ENCODE measurements at regions of chr19 and their contacts with region 1.

Region 1: GRCh38 chr19:41449079-41449864 is 6.3 kb downstream of the ERICH4 start:
- DNase-seq: peak; percentile 82
- ATAC-seq: peak; percentile 97
- H3K4me3 ChIP-seq: peak overlapping the region in 3 of 5 experiments; percentile 31 to 48 (median 35)
- H3K4me3 Mint-ChIP-seq: peak overlapping the region; percentile 74
- H3K27ac ChIP-seq: no peak overlapping the region
- H3K27ac Mint-ChIP-seq: peak overlapping the region; percentile 44
- H3K4me1 ChIP-seq: peaks cover 12 to 20% of the 10 kb centered on the region in 2 donors
- H3K4me1 Mint-ChIP-seq: peaks cover 20% of the 10 kb centered on the region
- H3K27me3 ChIP-seq: peaks cover 0 to 1% (median 0%) of the 10 kb centered on the region in 4 experiments
- H3K27me3 Mint-ChIP-seq: peaks cover 5% of the 10 kb centered on the region
- CTCF ChIP-seq: peak; percentile 99

Region 2: DNA sequence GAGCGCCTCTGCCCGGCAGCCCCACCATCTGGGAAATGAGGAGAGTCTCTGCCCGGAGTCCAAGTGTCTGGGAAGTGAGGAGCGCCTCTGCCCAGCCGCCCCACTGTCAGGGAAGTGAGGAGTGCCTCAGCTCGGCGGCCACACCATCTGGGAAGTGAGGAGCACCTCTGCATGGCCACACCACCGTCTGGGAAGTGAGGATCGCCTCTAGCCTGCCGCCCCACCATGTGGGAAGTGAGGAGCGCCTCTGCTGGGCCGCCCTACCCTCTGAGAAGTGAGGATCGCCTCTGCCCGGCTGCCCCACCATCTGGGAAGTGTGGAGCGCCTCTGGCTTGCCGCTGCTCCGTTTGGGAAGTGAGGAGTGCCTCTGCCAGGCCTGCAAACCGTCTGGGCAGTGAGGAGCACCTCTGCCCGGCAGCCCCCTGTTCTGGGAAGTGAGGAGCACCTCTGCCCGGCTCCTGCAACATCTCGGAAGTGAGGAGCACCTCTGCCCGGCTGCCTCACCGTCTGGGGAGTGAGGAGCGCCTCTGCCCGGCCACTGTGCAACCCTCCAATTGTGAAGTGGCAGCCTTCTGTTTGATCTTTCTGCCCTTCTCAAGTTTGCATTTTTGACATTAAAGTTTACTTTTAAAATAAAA is 65.9 kb after region 1 on chr19:
- CTCF ChIA-PET with region 1: interaction called, 14 read pairs
- POLR2A ChIA-PET with region 1: no interaction called
- intact Hi-C with region 1: loop called (anchors 1 kb)
- DNase-seq: no peak
- ATAC-seq: no peak
- H3K4me3 ChIP-seq: no peak overlapping the region
- H3K4me3 Mint-ChIP-seq: no peak overlapping the region
- H3K27ac ChIP-seq: no peak overlapping the region
- H3K27ac Mint-ChIP-seq: no peak overlapping the region
- H3K4me1 ChIP-seq: peaks cover 15 to 17% of the 10 kb centered on the region in 2 donors
- H3K4me1 Mint-ChIP-seq: peaks cover 18% of the 10 kb centered on the region
- H3K27me3 ChIP-seq: peaks cover 0 to 5% (median 2%) of the 10 kb centered on the region in 4 experiments
- H3K27me3 Mint-ChIP-seq: peaks cover 11% of the 10 kb centered on the region
- CTCF ChIP-seq: no peak

Region 3: DNA sequence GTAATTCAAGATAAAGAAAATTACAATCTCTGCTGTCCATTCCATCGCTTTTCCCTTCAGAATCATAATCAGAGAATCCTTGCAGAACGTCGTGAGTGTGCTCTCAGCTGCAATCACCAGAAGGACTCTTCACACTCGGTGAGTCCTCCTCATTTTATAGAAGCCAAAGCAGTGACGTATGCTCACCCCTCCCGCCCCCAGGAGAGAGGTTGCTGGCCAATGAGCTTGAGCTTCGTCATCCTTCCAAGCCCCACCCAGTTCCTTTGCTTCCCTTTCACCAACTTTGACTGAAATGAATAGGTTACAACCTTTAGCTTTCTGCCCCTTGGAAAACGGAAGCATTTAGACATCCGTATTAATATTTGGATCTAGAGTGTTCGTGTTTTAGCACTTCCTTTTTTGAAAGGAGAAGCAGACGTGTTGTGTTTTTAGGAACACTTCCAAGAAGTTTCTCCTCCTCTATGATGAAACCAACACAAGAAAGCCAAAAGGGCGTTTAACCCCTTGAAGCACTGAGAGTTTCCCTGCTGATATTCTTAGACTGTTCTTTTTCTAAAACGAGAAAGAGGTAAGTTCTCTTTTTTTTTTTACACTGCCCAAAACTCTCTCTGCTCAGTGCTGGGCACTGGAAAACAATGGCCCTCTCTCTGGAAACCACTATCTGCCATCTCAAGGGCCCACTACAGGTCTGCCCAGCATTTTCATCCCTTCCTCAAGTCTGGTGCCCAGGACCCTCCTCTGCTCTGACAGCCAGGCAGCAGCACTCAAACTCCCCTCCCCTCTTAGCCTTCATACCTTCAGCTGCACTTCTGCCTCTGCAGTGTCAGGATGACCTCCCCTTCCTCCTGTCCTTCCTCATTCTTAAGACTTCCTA is 82.4 kb after region 1 on chr19:
- CTCF ChIA-PET with region 1: interaction called, 163 read pairs
- POLR2A ChIA-PET with region 1: interaction called, 3 read pairs
- intact Hi-C with region 1: loop called (anchors 1 kb)
- DNase-seq: peak; percentile 92
- ATAC-seq: peak; percentile 79
- H3K4me3 ChIP-seq: peak overlapping the region; percentile 37 to 67 (median 52)
- H3K4me3 Mint-ChIP-seq: peak overlapping the region; percentile 80
- H3K27ac ChIP-seq: peak overlapping the region; percentile 72 to 83
- H3K27ac Mint-ChIP-seq: peak overlapping the region; percentile 88
- H3K4me1 ChIP-seq: peaks cover 64 to 78% of the 10 kb centered on the region in 2 donors
- H3K4me1 Mint-ChIP-seq: peaks cover 83% of the 10 kb centered on the region
- H3K27me3 ChIP-seq: no peaks in the 10 kb centered on the region
- H3K27me3 Mint-ChIP-seq: no peaks in the 10 kb centered on the region
- CTCF ChIP-seq: no peak

Region 4: DNA sequence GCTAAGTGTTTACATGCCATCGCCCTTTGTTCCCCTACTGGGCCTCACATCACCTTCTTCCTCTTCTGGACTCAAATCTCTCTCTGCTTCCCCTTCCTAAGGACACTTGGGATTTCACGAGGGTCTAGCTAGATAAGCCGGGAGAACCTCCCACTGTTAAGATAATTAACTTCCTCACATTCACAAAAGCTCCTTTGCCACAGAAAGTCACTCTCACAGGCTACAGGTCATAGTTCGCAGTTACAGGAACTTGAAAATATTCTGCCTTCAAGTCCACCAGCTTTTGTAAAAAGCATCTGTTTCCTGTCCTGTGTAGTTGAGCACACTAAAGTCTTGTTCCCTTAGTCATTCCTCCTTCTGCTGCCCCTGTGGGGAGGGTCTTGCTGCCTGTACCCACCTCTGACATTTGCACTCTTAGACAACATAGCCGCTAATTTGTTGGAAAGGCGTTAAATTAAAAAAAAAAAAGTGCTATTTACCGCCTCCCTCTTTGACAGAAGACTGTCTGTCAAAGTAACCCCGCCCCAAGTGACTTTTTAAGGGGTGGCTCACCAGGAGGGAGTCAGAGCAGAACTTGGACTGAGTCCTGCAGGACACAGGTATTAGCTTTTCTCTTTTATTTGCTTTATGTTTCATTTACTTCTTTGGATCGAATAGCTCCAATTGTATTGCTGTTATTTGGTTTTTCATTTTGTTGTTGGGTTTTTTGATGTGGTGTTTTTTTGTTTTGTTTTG is 99.8 kb after region 1 on chr19:
- CTCF ChIA-PET with region 1: interaction called, 43 read pairs
- POLR2A ChIA-PET with region 1: interaction called, 3 read pairs
- intact Hi-C with region 1: no loop called
- DNase-seq: peak; percentile 81
- ATAC-seq: peak; percentile 59
- H3K4me3 ChIP-seq: peak overlapping the region; percentile 63 to 98 (median 77)
- H3K4me3 Mint-ChIP-seq: peak overlapping the region; percentile 96
- H3K27ac ChIP-seq: peak overlapping the region; percentile 57 to 92
- H3K27ac Mint-ChIP-seq: peak overlapping the region; percentile 98
- H3K4me1 ChIP-seq: peaks cover 66 to 73% of the 10 kb centered on the region in 2 donors
- H3K4me1 Mint-ChIP-seq: peaks cover 71% of the 10 kb centered on the region
- H3K27me3 ChIP-seq: no peaks in the 10 kb centered on the region
- H3K27me3 Mint-ChIP-seq: no peaks in the 10 kb centered on the region
- CTCF ChIP-seq: no peak

Region 5: GRCh38 chr19:41570639-41571112 is 121.4 kb after region 1 on chr19:
- CTCF ChIA-PET with region 1: interaction called, 442 read pairs
- POLR2A ChIA-PET with region 1: no interaction called
- intact Hi-C with region 1: loop called (anchors 1 kb)
- DNase-seq: peak; percentile 88
- ATAC-seq: peak; percentile 98
- H3K4me3 ChIP-seq: no peak overlapping the region
- H3K4me3 Mint-ChIP-seq: no peak overlapping the region
- H3K27ac ChIP-seq: no peak overlapping the region
- H3K27ac Mint-ChIP-seq: no peak overlapping the region
- H3K4me1 ChIP-seq: peaks cover 9 to 12% of the 10 kb centered on the region in 2 donors
- H3K4me1 Mint-ChIP-seq: peaks cover 11% of the 10 kb centered on the region
- H3K27me3 ChIP-seq: no peaks in the 10 kb centered on the region
- H3K27me3 Mint-ChIP-seq: peaks cover under 1% of the 10 kb centered on the region
- CTCF ChIP-seq: peak; percentile 91

Measured in B cell (primary cell).